ENCODE measurements at regions of chr20 and their contacts with region 1.

Region 1: DNA sequence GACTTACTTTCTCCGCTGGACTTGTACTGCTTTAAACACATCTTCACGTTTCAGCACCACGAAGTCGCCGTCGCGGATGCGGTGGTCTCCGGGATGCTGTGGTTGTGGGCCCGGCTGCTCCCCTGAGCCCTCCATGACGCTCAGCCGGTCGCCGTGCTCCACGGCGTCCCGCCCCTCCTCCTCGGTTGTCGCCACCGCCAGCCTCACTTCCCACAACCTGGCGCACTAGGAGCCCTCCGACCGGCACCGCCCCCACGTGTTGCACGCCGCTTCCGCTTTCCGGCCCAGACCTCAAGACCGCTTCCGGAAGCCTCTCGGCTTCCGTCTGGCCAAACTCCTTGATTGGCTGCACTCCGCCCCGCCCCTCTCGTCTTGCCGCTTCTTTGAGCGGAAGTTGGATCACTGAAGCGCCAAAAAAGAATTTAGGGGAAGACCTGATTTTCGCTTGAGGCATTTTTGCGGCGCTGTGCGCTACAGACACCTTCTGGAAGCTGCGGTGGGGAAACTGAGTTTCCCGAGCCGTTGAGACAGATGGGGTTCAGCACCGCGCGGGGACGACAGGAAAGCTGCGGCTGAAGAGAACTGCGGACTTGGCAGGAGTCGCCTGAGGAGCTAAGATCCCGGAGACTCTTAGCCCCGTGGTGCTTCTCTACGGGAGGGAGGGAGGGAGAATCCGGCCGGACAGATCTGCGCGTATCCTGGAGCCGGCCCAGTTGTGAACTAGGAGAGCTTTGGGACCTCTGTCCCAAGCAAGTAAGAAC is at the starts of genes MCM8 and TRMT6:
- DNase-seq: peak; percentile 94
- H3K4me3 ChIP-seq: peak within 1 kb of the TSS; percentile 76 to 93 (median 81)
- H3K27ac ChIP-seq: peak within 1 kb of the TSS; percentile 67
- H3K4me1 ChIP-seq: peaks cover 24% of the 10 kb centered on the region
- H3K27me3 ChIP-seq: no peaks in the 10 kb centered on the region
- CTCF ChIP-seq: no peak
- POLR2A ChIP-seq: peak; percentile 60
- total RNA-seq, gene MCM8: 13.4 and 14.4 TPM in 2 replicates
- total RNA-seq, gene TRMT6: 11.0 and 12.0 TPM in 2 replicates

Region 2: DNA sequence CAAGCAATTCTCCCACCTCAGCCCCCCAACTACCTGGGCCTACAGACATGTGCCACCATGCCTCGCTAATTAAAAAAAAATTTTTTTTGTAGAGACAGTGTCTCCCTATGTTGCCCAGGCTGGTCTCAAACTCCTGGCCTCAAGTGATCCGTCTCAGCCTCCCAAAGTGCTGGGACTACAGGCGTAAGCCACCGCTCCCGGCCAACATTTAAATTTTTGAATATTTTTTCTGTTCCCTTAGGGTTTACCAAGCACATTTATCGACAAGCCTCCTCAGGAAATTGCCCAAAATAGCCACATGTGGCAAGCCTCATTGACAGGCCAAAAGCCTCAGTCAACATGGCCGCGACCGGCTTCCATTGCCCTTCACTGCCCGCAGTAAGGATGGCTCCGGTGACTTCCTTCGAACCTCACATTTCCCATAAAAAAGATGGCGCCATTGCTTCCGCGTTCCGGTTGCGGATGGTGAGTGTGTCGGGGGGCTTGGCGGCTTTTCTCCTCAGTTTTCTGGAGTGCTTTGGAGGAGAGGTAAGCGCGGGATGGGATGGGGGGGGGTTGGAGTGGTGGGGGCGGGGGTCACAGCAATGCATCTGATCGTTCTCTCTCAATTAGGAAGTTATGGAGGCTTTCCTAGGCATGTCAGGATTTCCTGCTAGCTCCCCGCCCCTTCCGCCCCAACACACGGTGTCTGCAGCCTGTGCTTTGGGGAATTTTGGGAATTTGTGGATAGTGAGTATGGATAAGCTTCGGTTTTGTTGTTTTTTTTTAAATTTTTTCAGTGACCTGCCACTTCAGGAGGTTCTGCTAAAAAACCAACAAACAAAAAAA is 200.3 kb before region 1 on chr20 and contains the start of gene SHLD1:
- CTCF ChIA-PET with region 1: no interaction called
- POLR2A ChIA-PET with region 1: no interaction called
- dilution Hi-C with region 1: no loop called
- intact Hi-C with region 1: loop called (anchors 1 kb)
- DNase-seq: peak; percentile 75
- H3K4me3 ChIP-seq: peak within 1 kb of the TSS; percentile 37 to 85 (median 76)
- H3K27ac ChIP-seq: peak within 1 kb of the TSS; percentile 57
- H3K4me1 ChIP-seq: no peaks in the 10 kb centered on the region
- H3K27me3 ChIP-seq: no peaks in the 10 kb centered on the region
- CTCF ChIP-seq: no peak
- POLR2A ChIP-seq: no peak
- total RNA-seq, gene SHLD1: 4.7 and 5.1 TPM in 2 replicates

Region 3: GRCh38 chr20:5770987-5771318 is 179.5 kb before region 1 on chr20:
- CTCF ChIA-PET with region 1: no interaction called
- POLR2A ChIA-PET with region 1: no interaction called
- dilution Hi-C with region 1: no loop called
- intact Hi-C with region 1: no loop called
- DNase-seq: no peak
- H3K4me3 ChIP-seq: no peak overlapping the region
- H3K27ac ChIP-seq: no peak overlapping the region
- H3K4me1 ChIP-seq: no peaks in the 10 kb centered on the region
- H3K27me3 ChIP-seq: no peaks in the 10 kb centered on the region
- CTCF ChIP-seq: no peak
- POLR2A ChIP-seq: no peak

Region 4: GRCh38 chr20:5806457-5807263 is 143.8 kb before region 1 on chr20:
- CTCF ChIA-PET with region 1: no interaction called
- POLR2A ChIA-PET with region 1: no interaction called
- dilution Hi-C with region 1: no loop called
- intact Hi-C with region 1: loop called (anchors 1 kb)
- DNase-seq: peak; percentile 11
- H3K4me3 ChIP-seq: no peak overlapping the region
- H3K27ac ChIP-seq: no peak overlapping the region
- H3K4me1 ChIP-seq: peaks cover 14% of the 10 kb centered on the region
- H3K27me3 ChIP-seq: no peaks in the 10 kb centered on the region
- CTCF ChIP-seq: peak; percentile 15
- POLR2A ChIP-seq: no peak

Region 5: GRCh38 chr20:5848711-5849505 is 101.5 kb before region 1 on chr20:
- CTCF ChIA-PET with region 1: no interaction called
- POLR2A ChIA-PET with region 1: no interaction called
- dilution Hi-C with region 1: no loop called
- intact Hi-C with region 1: no loop called
- DNase-seq: peak; percentile 31
- H3K4me3 ChIP-seq: no peak overlapping the region
- H3K27ac ChIP-seq: no peak overlapping the region
- H3K4me1 ChIP-seq: no peaks in the 10 kb centered on the region
- H3K27me3 ChIP-seq: no peaks in the 10 kb centered on the region
- CTCF ChIP-seq: no peak
- POLR2A ChIP-seq: no peak

Region 6: GRCh38 chr20:5918856-5919625 is 31.4 kb before region 1 on chr20:
- CTCF ChIA-PET with region 1: no interaction called
- POLR2A ChIA-PET with region 1: no interaction called
- dilution Hi-C with region 1: no loop called
- intact Hi-C with region 1: loop called (anchors 1 kb)
- DNase-seq: peak; percentile 67
- H3K4me3 ChIP-seq: peak overlapping the region in 1 of 3 experiments; percentile 41
- H3K27ac ChIP-seq: peak overlapping the region; percentile 89
- H3K4me1 ChIP-seq: peaks cover 15% of the 10 kb centered on the region
- H3K27me3 ChIP-seq: peaks cover 2 to 3% of the 10 kb centered on the region in 2 experiments
- CTCF ChIP-seq: no peak
- POLR2A ChIP-seq: no peak

Region 7: DNA sequence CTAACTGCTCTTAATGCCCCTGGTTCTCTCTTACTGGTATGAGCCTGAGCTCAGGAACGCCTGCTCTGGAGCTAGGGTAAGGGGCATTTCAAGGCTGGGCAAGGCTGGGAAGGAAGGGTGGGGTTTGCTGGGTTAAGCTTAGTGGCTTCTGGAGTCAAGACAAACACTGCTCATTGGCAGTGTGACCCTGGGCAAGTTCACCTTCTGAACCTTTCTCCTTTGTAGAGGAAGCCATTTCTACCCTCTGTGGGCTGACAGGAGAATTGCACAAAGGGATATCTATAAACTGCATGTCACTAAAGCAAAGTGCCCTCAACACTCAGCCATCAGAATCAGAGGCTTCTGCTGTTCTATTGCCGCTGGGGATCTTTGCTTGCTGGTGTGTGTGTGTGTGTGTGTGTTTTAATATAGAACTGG is 123.7 kb after region 1 on chr20:
- CTCF ChIA-PET with region 1: interaction called, 3 read pairs
- POLR2A ChIA-PET with region 1: no interaction called
- dilution Hi-C with region 1: no loop called
- intact Hi-C with region 1: loop called (anchors 1 kb)
- DNase-seq: no peak
- H3K4me3 ChIP-seq: no peak overlapping the region
- H3K27ac ChIP-seq: no peak overlapping the region
- H3K4me1 ChIP-seq: no peaks in the 10 kb centered on the region
- H3K27me3 ChIP-seq: no peaks in the 10 kb centered on the region
- CTCF ChIP-seq: peak; percentile 14 to 18
- POLR2A ChIP-seq: no peak

Region 8: GRCh38 chr20:6094063-6094462 is 143.6 kb after region 1 on chr20:
- CTCF ChIA-PET with region 1: no interaction called
- POLR2A ChIA-PET with region 1: no interaction called
- dilution Hi-C with region 1: no loop called
- intact Hi-C with region 1: no loop called
- DNase-seq: no peak
- H3K4me3 ChIP-seq: no peak overlapping the region
- H3K27ac ChIP-seq: no peak overlapping the region
- H3K4me1 ChIP-seq: no peaks in the 10 kb centered on the region
- H3K27me3 ChIP-seq: no peaks in the 10 kb centered on the region
- CTCF ChIP-seq: no peak
- POLR2A ChIP-seq: no peak